OCI-LY7 (cell line): ENCODE measurements at regions of chr3 and their contacts with region 1.

Region 1: DNA sequence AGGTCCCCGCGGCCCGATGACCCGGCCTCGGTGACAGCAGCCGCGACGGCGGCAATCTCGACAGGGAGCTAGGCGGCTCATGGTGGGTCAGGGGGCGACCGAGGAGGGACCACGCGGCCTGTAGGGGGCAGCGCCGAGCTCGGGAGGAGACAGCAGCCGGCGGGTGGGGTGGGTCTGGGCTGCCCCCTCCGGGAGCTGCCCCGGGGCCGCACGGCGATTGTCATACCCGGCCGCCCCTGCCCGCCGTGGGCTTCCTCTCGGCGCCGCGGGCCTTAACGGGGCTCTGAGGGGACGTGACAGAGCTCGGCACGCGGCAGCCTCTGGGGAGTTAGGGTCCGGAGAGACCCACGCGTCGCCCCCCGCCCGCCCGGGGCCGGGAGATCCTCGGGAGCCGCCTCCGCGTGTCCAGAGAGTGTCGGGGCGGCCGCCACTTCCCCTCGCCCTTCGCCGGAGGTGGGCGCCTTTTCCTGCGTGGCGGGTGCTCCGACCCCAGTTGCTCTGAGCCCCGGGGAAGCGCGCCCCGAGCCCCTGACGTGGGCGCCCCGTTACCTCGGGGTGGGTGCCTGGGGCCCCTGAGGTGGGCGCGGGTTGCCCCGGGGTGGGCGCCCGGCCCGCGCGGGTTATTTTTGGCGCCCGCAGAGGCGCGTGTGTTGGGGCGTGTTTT is 539 bp upstream of the PLCL2 start:
- DNase-seq: peak; percentile 83
- H3K4me3 ChIP-seq: peak overlapping the region; percentile 76
- H3K27ac ChIP-seq: peak overlapping the region; percentile 79
- H3K4me1 ChIP-seq: peaks cover 22% of the 10 kb centered on the region
- CTCF ChIP-seq: peak; percentile 77

Region 2: DNA sequence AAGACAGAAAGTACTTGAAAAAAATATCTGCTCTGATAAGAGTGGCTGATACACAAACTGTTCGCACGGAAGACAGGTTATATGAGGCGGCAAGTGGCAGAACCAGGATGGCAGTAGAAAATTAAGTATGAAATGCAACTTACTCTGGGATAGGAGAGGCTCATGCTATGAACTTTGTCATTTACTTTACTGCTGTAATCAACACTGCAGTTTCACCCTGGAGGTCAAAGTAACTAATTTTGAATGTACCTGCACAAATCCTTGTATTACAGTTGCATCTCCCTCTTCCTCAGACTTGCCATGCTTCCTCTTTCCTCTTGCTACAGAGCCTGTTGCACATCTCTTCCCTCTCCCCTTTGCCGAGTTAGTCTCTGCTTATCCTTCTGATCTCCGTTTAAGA is 1321.7 kb before region 1 on chr3:
- CTCF ChIA-PET with region 1: no interaction called
- POLR2A ChIA-PET with region 1: no interaction called
- intact Hi-C with region 1: no loop called
- DNase-seq: no peak
- H3K4me3 ChIP-seq: no peak overlapping the region
- H3K27ac ChIP-seq: no peak overlapping the region
- H3K4me1 ChIP-seq: peaks cover 3% of the 10 kb centered on the region
- CTCF ChIP-seq: no peak

Region 3: DNA sequence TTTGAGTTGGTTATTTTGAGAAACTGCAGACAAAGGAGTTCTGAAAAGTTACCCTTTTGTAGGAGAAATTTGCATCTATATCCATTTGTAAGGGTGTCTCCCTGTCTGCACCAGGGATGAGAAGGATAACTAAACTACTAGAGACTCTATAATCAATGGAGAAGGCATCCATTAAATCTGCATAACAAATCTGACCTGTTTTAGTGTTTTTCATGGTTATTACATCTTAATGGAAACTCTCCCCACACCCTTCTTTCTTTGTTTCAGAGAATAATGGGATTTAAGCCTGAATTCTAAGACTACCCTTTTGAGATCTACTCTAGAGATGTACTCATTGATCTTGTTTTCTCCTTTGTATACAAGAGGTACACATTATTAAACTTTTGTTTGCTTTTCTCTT is 197.0 kb before region 1 on chr3:
- CTCF ChIA-PET with region 1: no interaction called
- POLR2A ChIA-PET with region 1: no interaction called
- intact Hi-C with region 1: no loop called
- DNase-seq: no peak
- H3K4me3 ChIP-seq: no peak overlapping the region
- H3K27ac ChIP-seq: no peak overlapping the region
- H3K4me1 ChIP-seq: no peaks in the 10 kb centered on the region
- CTCF ChIP-seq: no peak

Region 4: DNA sequence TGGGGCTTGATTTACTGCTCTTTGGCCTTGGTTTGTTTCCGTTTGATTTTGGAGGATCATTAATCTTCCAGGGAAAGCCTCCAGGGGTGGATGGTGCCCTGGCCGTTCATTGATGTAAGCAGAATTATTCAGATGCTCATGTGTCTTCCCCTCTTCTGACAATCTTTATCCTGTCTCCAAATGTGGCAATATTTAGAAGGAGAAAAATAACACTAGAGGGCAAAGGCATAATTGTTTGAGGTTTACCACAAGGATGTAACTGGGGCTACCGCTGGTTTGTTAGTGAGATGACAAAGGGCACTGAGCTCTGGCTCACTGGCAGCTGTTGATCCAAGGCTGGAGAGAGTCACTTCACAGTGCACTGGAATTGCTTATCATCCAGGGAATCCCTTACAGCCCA is 17.6 kb before region 1 on chr3:
- CTCF ChIA-PET with region 1: interaction called, 3 read pairs
- POLR2A ChIA-PET with region 1: interaction called, 10 read pairs
- intact Hi-C with region 1: no loop called
- DNase-seq: peak; percentile 16
- H3K4me3 ChIP-seq: no peak overlapping the region
- H3K27ac ChIP-seq: no peak overlapping the region
- H3K4me1 ChIP-seq: peaks cover 32% of the 10 kb centered on the region
- CTCF ChIP-seq: no peak

Region 5: DNA sequence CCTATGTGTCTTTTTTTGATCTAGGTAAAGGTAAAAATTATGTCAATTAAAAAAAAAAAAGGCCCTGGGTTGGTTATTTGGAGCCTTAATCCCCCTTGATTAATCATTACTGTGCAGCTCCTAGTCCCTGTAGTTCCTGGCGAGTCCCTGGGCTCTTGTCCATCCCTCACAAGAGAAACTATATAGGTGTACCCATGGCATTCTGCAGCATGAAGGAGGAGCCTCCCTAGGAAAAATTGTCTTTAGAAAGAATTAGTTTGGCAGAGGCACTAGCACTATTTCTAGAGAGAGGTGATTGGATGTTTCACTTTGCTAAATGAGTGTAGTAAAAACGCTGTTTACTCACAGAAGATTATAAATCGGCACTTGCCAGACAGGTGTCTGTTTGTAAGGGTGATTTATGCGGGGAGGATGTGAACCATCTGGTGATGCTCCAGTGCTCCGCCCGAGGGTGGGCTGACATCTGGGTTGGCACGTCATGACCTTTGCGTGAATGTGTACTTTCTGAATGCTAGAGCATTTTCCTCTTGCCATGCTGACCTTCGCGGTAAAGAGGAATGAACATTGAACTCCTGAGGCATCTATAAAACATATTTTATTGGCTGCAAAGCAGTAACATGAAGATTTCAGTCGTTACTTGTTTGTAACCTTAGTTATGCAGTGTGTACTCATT is 13.2 kb after region 1 on chr3:
- CTCF ChIA-PET with region 1: interaction called, 7 read pairs
- POLR2A ChIA-PET with region 1: interaction called, 96 read pairs
- intact Hi-C with region 1: no loop called
- DNase-seq: peak; percentile 91
- H3K4me3 ChIP-seq: peak overlapping the region; percentile 65
- H3K27ac ChIP-seq: peak overlapping the region; percentile 77
- H3K4me1 ChIP-seq: peaks cover 94% of the 10 kb centered on the region
- CTCF ChIP-seq: no peak

Region 6: DNA sequence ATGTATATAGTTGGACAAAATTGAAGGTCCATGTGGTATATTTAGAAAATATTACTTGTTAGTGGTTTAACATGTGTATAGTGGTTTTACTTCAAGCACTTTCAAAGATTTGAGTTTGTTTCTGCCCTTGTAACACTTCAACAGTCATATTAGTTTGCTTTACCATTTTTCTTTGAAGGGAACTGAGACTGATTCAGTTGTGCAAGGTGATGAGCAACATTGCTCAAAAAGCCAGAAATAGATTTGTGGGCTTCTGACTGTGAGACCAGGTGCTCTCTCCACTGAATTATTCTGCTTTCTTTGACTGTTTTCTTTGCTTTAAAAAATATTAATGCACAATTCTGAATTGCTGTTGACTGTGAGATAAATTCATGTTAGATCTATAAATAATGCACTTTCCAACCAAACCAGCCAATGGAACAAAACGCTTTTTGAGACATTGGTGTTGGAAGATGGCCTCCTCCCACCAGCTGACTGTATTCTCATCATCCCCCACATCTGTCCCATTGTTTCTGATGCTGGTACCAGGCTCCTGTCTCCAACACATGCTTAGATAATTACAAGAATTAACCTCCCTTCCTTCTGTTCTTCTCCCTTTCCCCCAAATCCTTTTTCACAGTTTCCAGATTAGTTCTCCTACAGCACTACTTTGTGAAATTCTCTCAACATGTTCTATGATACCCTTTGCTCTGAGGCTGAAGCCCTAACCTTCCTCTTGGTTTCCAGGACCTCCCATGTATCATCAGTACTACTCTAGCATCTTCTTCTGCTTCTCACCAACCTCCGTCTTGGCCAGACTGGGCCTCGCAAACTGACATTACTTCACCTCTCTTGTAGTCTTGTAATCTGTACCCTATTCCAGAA is 28.4 kb after region 1 on chr3:
- CTCF ChIA-PET with region 1: no interaction called
- POLR2A ChIA-PET with region 1: interaction called, 18 read pairs
- intact Hi-C with region 1: loop called (anchors 1 kb)
- DNase-seq: peak; percentile 86
- H3K4me3 ChIP-seq: peak overlapping the region; percentile 52
- H3K27ac ChIP-seq: peak overlapping the region; percentile 98
- H3K4me1 ChIP-seq: peaks cover 90% of the 10 kb centered on the region
- CTCF ChIP-seq: no peak

Region 7: GRCh38 chr3:16950845-16951244 is 66.6 kb after region 1 on chr3:
- CTCF ChIA-PET with region 1: no interaction called
- POLR2A ChIA-PET with region 1: no interaction called
- intact Hi-C with region 1: no loop called
- DNase-seq: no peak
- H3K4me3 ChIP-seq: no peak overlapping the region
- H3K27ac ChIP-seq: no peak overlapping the region
- H3K4me1 ChIP-seq: no peaks in the 10 kb centered on the region
- CTCF ChIP-seq: no peak

Region 8: GRCh38 chr3:17032407-17033034 is 148.3 kb after region 1 on chr3:
- CTCF ChIA-PET with region 1: interaction called, 5 read pairs
- POLR2A ChIA-PET with region 1: no interaction called
- intact Hi-C with region 1: loop called (anchors 1 kb)
- DNase-seq: peak; percentile 38
- H3K4me3 ChIP-seq: no peak overlapping the region
- H3K27ac ChIP-seq: no peak overlapping the region
- H3K4me1 ChIP-seq: peaks cover 26% of the 10 kb centered on the region
- CTCF ChIP-seq: peak; percentile 85

Region 9: DNA sequence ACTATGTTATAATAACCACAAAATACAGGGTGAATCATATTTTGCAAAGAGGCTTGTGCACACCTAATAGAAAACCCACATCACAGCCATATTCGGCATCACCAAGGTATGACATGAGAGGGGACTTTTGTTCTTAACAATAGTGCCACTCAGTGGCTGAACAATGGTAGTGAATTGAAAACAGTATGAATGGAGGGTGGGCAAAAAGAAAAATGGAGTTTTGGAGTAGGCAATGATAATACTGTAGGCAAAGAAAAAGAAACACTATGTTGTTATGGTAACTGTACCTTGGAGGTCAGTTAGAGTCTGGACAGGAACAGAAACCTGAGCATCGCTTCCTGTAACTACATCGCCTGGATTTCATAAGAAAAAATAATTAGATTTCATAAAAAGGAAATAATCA is 349.2 kb after region 1 on chr3:
- CTCF ChIA-PET with region 1: no interaction called
- POLR2A ChIA-PET with region 1: no interaction called
- intact Hi-C with region 1: loop called (anchors 2 kb)
- DNase-seq: peak; percentile 83
- H3K4me3 ChIP-seq: no peak overlapping the region
- H3K27ac ChIP-seq: no peak overlapping the region
- H3K4me1 ChIP-seq: peaks cover 45% of the 10 kb centered on the region
- CTCF ChIP-seq: peak; percentile 94

Region 10: DNA sequence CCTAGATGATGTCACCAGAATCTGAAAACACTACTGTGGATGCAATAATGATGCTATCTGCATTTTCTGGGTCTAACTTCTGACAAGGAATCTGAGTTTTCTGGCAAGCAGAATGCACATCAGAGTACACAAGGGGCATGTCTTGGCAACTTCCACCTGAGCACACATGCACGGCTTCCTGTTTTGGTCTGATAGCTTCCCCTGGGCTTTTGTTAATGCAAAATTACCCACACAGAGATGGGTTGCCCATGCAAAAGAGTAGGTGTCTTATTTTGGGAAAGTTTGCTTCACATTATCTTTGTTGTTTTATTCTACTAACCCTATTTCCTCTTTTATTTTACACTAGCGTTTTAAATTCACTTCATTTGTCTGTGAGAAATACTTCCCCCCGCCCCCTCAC is 1615.1 kb after region 1 on chr3:
- CTCF ChIA-PET with region 1: no interaction called
- POLR2A ChIA-PET with region 1: no interaction called
- intact Hi-C with region 1: no loop called
- DNase-seq: peak; percentile 90
- H3K4me3 ChIP-seq: peak overlapping the region; percentile 40
- H3K27ac ChIP-seq: peak overlapping the region; percentile 75
- H3K4me1 ChIP-seq: peaks cover 35% of the 10 kb centered on the region
- CTCF ChIP-seq: no peak